ENCODE measurements at regions of chr12 and their contacts with region 1.

Region 1: DNA sequence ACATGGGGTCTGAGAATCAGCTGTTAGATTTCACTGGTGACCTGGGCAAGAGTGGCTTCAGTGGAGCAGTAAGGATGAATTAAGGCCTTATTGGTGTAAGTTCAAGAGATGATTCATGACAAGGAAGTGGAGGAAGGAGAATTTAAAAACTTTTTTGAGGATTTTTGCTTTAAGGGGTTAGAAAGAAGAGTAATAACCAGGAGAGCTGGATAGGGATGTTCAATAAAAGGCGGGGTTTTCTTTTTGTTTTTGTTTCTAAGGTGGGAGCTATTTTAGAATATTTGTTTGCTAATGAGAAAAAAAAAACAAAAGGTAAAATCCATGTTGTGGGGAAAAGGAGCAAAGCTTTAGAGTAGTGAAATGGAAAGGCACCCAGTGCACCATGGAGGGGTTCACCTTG is 15.2 kb upstream of the TUBA1B start:
- DNase-seq: no peak
- H3K4me3 ChIP-seq: no peak overlapping the region
- H3K27ac ChIP-seq: no peak overlapping the region
- H3K4me1 ChIP-seq: no peaks in the 10 kb centered on the region
- H3K27me3 ChIP-seq: no peaks in the 10 kb centered on the region
- CTCF ChIP-seq: no peak
- POLR2A ChIP-seq: no peak

Region 2: GRCh38 chr12:49055981-49056754 is 90.2 kb before region 1 on chr12:
- intact Hi-C with region 1: no loop called
- DNase-seq: no peak
- H3K4me3 ChIP-seq: peak overlapping the region in 1 of 2 donors; percentile 98
- H3K27ac ChIP-seq: no peak overlapping the region
- H3K4me1 ChIP-seq: peaks cover 53% of the 10 kb centered on the region
- H3K27me3 ChIP-seq: no peaks in the 10 kb centered on the region
- CTCF ChIP-seq: no peak
- POLR2A ChIP-seq: no peak

Region 3: DNA sequence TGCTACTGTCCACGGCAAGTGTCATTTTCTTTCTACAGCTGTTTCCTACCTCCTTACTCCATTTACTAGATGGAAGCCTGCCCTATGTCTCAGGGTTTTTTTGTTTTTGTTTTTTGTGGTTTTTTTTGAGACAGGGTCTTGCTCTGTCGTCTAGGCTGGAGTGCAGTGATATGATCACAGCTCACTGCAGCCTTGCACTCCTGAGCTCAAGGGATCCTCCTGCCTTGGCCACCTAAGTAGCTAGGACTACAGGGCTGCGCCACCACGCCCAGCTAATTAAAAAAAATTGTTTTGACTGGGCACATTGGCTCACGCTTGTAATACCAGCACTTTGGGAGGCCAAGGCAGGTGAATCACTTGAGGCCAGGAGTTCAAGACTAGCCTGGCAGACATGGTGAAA is 27.8 kb after region 1 on chr12:
- intact Hi-C with region 1: loop called (anchors 2 kb)
- DNase-seq: no peak
- H3K4me3 ChIP-seq: no peak overlapping the region
- H3K27ac ChIP-seq: no peak overlapping the region
- H3K4me1 ChIP-seq: no peaks in the 10 kb centered on the region
- H3K27me3 ChIP-seq: no peaks in the 10 kb centered on the region
- CTCF ChIP-seq: no peak
- POLR2A ChIP-seq: no peak

Measured in vagina (tissue), 2 donors.